CD8-positive, alpha-beta T cell (primary cell): ENCODE measurements at regions of chr17 and their contacts with region 1.

Region 1: GRCh38 chr17:19447085-19447583 is 36.1 kb downstream of the RNF112 start:
- DNase-seq: peak; percentile 36 to 79 (median 70)
- ATAC-seq: peak; percentile 80
- H3K4me3 ChIP-seq: no peak overlapping the region
- H3K4me3 Mint-ChIP-seq: no peak overlapping the region
- H3K27ac ChIP-seq: no peak overlapping the region
- H3K27ac Mint-ChIP-seq: no peak overlapping the region
- H3K4me1 ChIP-seq: no peaks in the 10 kb centered on the region
- H3K4me1 Mint-ChIP-seq: no peaks in the 10 kb centered on the region
- H3K27me3 ChIP-seq: no peaks in the 10 kb centered on the region
- H3K27me3 Mint-ChIP-seq: peaks cover 24% of the 10 kb centered on the region
- CTCF ChIP-seq: peak; percentile 92

Region 2: GRCh38 chr17:19370493-19370960 is 76.6 kb before region 1 on chr17:
- CTCF ChIA-PET with region 1: interaction called, 215 read pairs
- POLR2A ChIA-PET with region 1: interaction called, 3 read pairs
- intact Hi-C with region 1: no loop called
- DNase-seq: peak in 1 of 9 experiments; percentile 52
- ATAC-seq: peak; percentile 34
- H3K4me3 ChIP-seq: peak overlapping the region in 1 of 2 experiments; percentile 18
- H3K4me3 Mint-ChIP-seq: peak overlapping the region; percentile 63
- H3K27ac ChIP-seq: peak overlapping the region; percentile 6 to 86
- H3K27ac Mint-ChIP-seq: no peak overlapping the region
- H3K4me1 ChIP-seq: peaks cover 29% of the 10 kb centered on the region
- H3K4me1 Mint-ChIP-seq: peaks cover 32% of the 10 kb centered on the region
- H3K27me3 ChIP-seq: no peaks in the 10 kb centered on the region
- H3K27me3 Mint-ChIP-seq: peaks cover 4% of the 10 kb centered on the region
- CTCF ChIP-seq: no peak

Region 3: DNA sequence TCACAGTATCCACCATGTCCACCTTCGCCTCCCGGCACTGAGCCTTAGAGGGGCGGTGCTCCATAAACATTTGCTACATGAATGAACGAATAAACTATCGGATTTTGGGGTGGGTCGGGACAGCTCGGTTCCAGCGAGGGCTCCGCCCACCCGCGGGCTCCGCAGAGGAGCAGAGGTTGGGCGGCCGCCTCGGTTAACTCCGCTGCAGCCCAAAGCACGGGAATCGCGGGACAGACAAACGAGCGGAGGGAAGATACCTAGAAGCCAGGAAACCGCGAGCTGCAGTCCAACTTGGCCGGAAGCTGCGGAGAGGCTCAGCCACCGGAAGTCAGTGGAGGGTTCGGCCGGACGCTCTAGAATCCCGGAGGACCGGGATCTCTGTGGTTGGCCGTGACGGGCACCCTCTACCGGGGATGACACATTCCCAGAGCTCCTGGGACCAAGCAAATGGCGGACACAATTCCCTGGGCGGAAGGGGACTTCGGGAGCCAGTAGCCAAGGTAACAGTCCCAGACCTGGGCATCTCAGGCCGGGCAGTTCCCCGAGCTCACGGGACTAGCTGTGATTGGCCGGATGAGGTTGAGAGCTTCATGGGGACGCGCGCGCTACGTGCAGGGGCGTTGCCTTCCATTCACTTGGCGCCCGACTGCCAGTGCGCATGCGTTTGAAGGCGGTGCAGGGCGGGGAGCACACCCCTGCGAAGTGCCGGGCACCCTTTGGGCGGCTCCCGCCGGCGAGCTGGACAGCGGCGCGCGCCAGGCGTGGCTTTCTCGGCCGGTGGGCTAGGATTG is 69.3 kb before region 1 on chr17:
- CTCF ChIA-PET with region 1: interaction called, 15 read pairs
- POLR2A ChIA-PET with region 1: no interaction called
- intact Hi-C with region 1: loop called in 1 of 2 experiments (anchors 1 kb)
- DNase-seq: peak; percentile 82 to 98 (median 93)
- ATAC-seq: peak; percentile 89
- H3K4me3 ChIP-seq: peak overlapping the region; percentile 81 to 96
- H3K4me3 Mint-ChIP-seq: peak overlapping the region; percentile 100
- H3K27ac ChIP-seq: peak overlapping the region; percentile 81 to 86
- H3K27ac Mint-ChIP-seq: peak overlapping the region; percentile 96
- H3K4me1 ChIP-seq: peaks cover 6% of the 10 kb centered on the region
- H3K4me1 Mint-ChIP-seq: peaks cover 15% of the 10 kb centered on the region
- H3K27me3 ChIP-seq: no peaks in the 10 kb centered on the region
- H3K27me3 Mint-ChIP-seq: no peaks in the 10 kb centered on the region
- CTCF ChIP-seq: no peak

Region 4: GRCh38 chr17:19433727-19434340 is 13.3 kb before region 1 on chr17:
- CTCF ChIA-PET with region 1: interaction called, 15 read pairs
- POLR2A ChIA-PET with region 1: no interaction called
- intact Hi-C with region 1: no loop called
- DNase-seq: peak in 1 of 9 experiments; percentile 25
- ATAC-seq: no peak
- H3K4me3 ChIP-seq: no peak overlapping the region
- H3K4me3 Mint-ChIP-seq: no peak overlapping the region
- H3K27ac ChIP-seq: no peak overlapping the region
- H3K27ac Mint-ChIP-seq: no peak overlapping the region
- H3K4me1 ChIP-seq: no peaks in the 10 kb centered on the region
- H3K4me1 Mint-ChIP-seq: no peaks in the 10 kb centered on the region
- H3K27me3 ChIP-seq: no peaks in the 10 kb centered on the region
- H3K27me3 Mint-ChIP-seq: no peaks in the 10 kb centered on the region
- CTCF ChIP-seq: no peak

Region 5: DNA sequence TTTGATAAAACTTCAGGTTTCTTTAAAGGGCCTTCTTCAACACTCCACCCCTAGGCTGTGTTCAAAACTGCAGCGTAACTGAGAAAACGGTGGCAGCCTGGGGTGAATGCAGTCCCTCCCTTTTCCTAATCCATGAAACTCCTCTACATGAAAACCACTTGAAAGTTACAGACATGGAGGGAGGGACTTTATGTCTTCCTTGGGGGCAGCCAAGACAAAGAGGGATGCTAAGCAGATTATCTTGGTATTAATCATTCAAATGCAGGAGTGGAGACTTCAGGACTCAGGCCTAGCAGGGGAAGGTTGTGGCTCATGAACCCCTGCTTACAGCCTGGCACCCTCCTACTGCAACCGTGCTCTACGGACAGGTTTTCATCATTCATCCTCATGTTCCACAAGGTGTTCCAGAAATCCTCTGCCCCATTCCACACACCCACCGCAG is 10.7 kb after region 1 on chr17:
- CTCF ChIA-PET with region 1: interaction called, 39 read pairs
- POLR2A ChIA-PET with region 1: interaction called, 3 read pairs
- intact Hi-C with region 1: no loop called
- DNase-seq: peak in 1 of 9 experiments; percentile 31
- ATAC-seq: no peak
- H3K4me3 ChIP-seq: no peak overlapping the region
- H3K4me3 Mint-ChIP-seq: no peak overlapping the region
- H3K27ac ChIP-seq: no peak overlapping the region
- H3K27ac Mint-ChIP-seq: no peak overlapping the region
- H3K4me1 ChIP-seq: peaks cover 11% of the 10 kb centered on the region
- H3K4me1 Mint-ChIP-seq: peaks cover 22% of the 10 kb centered on the region
- H3K27me3 ChIP-seq: no peaks in the 10 kb centered on the region
- H3K27me3 Mint-ChIP-seq: peaks cover 3% of the 10 kb centered on the region
- CTCF ChIP-seq: no peak

Region 6: GRCh38 chr17:19629449-19629848 is 182.3 kb after region 1 on chr17:
- CTCF ChIA-PET with region 1: no interaction called
- POLR2A ChIA-PET with region 1: no interaction called
- intact Hi-C with region 1: no loop called
- DNase-seq: no peak
- ATAC-seq: no peak
- H3K4me3 ChIP-seq: no peak overlapping the region
- H3K4me3 Mint-ChIP-seq: no peak overlapping the region
- H3K27ac ChIP-seq: no peak overlapping the region
- H3K27ac Mint-ChIP-seq: no peak overlapping the region
- H3K4me1 ChIP-seq: no peaks in the 10 kb centered on the region
- H3K4me1 Mint-ChIP-seq: no peaks in the 10 kb centered on the region
- H3K27me3 ChIP-seq: no peaks in the 10 kb centered on the region
- H3K27me3 Mint-ChIP-seq: peaks cover 17% of the 10 kb centered on the region
- CTCF ChIP-seq: no peak

Region 7: GRCh38 chr17:20128036-20128667 is 681.0 kb after region 1 on chr17:
- CTCF ChIA-PET with region 1: no interaction called
- POLR2A ChIA-PET with region 1: no interaction called
- intact Hi-C with region 1: no loop called
- DNase-seq: no peak
- ATAC-seq: no peak
- H3K4me3 ChIP-seq: no peak overlapping the region
- H3K4me3 Mint-ChIP-seq: no peak overlapping the region
- H3K27ac ChIP-seq: no peak overlapping the region
- H3K27ac Mint-ChIP-seq: no peak overlapping the region
- H3K4me1 ChIP-seq: no peaks in the 10 kb centered on the region
- H3K4me1 Mint-ChIP-seq: no peaks in the 10 kb centered on the region
- H3K27me3 ChIP-seq: no peaks in the 10 kb centered on the region
- H3K27me3 Mint-ChIP-seq: no peaks in the 10 kb centered on the region
- CTCF ChIP-seq: no peak